ENCODE measurements at regions of chr4 and their contacts with region 1.

Region 1: DNA sequence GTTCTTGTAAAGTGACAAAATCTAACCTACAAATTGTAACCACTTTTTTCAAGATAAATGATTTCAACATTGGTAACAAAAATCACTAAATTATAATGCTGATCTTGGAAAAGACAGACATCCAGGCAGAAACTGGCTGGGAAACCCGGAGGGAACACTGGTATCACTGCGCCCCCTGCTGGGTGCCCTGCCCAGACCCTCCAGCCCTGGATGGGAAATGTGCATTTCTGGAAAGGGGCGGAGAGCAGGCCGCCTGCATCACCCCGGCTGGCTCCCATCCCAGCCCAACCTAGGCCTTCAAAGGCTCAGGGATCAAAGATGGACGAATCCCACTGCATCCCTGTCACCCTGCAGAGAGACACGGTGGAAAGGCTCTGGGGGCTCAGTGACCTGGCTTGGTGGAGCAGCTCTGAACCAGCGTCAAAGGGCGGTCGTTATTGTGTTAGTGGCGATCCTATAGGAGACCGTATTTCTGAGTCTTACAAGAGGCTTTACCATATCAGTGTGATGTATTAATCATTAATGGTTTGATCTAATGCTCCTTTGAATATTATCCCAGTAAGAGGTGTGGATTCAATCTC is 37.3 kb downstream of the ACOX3 start:
- DNase-seq: peak; percentile 83
- H3K4me3 Mint-ChIP-seq: no peak overlapping the region
- H3K27ac Mint-ChIP-seq: no peak overlapping the region
- H3K4me1 Mint-ChIP-seq: no peaks in the 10 kb centered on the region
- H3K27me3 Mint-ChIP-seq: no peaks in the 10 kb centered on the region
- CTCF ChIP-seq: peak; percentile 66

Region 2: GRCh38 chr4:6788123-6788522 is 1615.1 kb before region 1 on chr4:
- CTCF ChIA-PET with region 1: no interaction called
- intact Hi-C with region 1: no loop called
- DNase-seq: no peak
- H3K4me3 Mint-ChIP-seq: no peak overlapping the region
- H3K27ac Mint-ChIP-seq: no peak overlapping the region
- H3K4me1 Mint-ChIP-seq: peaks cover 13% of the 10 kb centered on the region
- H3K27me3 Mint-ChIP-seq: no peaks in the 10 kb centered on the region
- CTCF ChIP-seq: no peak

Region 3: DNA sequence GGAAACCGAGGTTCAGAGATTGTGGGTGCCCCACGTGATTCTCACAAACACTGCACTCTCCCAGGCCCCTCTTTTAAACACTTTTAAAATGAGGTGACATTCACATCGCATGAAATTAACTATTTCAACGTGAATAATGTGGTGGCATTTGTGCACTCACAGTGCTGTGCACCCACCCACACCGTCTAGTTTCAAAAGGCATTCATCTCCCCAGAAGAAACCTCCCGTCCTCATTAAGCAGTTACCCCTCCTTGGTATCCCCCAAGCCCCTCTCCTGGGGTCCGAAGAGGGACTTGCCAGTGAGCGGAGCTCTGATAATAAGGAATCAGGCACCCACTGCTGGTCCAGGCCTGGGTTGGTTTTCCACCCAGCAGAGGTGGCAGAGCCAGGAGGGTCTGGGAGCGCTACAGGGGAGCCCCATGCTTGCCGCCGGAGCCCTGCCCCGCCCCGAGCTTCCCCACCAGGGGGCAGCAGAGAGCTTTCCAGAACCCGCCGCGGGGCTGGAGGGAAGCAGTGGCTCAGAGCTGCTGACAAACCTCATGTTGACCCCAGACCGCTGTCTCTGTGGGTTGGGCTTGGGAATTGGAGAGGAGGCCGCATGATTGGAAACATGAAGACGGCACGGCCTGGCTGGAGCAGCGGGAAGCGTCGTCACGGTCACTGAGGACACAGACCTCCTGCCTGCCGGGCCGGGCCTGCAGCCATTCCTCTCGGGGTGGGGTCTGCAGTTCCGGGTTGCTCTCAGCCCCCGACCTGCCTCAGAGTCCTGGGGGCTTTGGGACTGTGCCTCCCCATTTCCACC is 161.2 kb before region 1 on chr4:
- CTCF ChIA-PET with region 1: interaction called, 11 read pairs
- intact Hi-C with region 1: loop called (anchors 1 kb)
- DNase-seq: peak; percentile 85
- H3K4me3 Mint-ChIP-seq: no peak overlapping the region
- H3K27ac Mint-ChIP-seq: no peak overlapping the region
- H3K4me1 Mint-ChIP-seq: no peaks in the 10 kb centered on the region
- H3K27me3 Mint-ChIP-seq: no peaks in the 10 kb centered on the region
- CTCF ChIP-seq: peak; percentile 84

Region 4: GRCh38 chr4:8267077-8267476 is 136.2 kb before region 1 on chr4:
- CTCF ChIA-PET with region 1: interaction called, 11 read pairs
- intact Hi-C with region 1: loop called (anchors 1 kb)
- DNase-seq: peak; percentile 74
- H3K4me3 Mint-ChIP-seq: no peak overlapping the region
- H3K27ac Mint-ChIP-seq: no peak overlapping the region
- H3K4me1 Mint-ChIP-seq: no peaks in the 10 kb centered on the region
- H3K27me3 Mint-ChIP-seq: peaks cover 71% of the 10 kb centered on the region
- CTCF ChIP-seq: no peak

Region 5: DNA sequence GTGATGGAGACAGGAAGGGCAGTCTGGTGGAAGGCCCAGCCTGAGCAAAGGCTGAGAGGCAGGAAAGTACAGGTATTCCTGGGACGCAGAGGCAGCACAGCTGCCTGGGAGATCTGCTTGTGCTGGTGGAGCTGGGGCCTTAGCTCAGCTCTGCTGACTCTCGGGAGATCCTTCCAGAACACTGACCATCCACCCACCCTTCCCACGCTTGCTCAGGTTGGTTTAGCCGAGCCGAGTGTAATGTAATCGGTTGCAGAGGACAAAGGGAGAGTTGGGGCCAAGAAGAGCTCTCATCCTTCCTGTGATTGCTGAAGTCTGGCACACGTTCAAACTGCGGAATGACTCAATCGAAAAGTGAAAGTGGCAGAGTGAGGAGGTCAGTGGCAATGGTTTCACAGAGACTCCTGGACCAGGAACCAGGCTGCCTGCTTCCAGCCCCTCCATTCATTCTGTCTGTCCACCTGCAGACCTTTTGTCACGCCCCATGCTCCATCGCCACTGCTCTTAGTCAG is 133.8 kb after region 1 on chr4:
- CTCF ChIA-PET with region 1: no interaction called
- intact Hi-C with region 1: no loop called
- DNase-seq: peak; percentile 61
- H3K4me3 Mint-ChIP-seq: no peak overlapping the region
- H3K27ac Mint-ChIP-seq: peak overlapping the region; percentile 68
- H3K4me1 Mint-ChIP-seq: peaks cover 55% of the 10 kb centered on the region
- H3K27me3 Mint-ChIP-seq: no peaks in the 10 kb centered on the region
- CTCF ChIP-seq: no peak